ENCODE measurements at regions of chr11 and their contacts with region 1.

Region 1: GRCh38 chr11:46338988-46339666 is 8.1 kb upstream of the DGKZ start:
- DNase-seq: peak; percentile 59
- H3K4me3 ChIP-seq: peak overlapping the region in 1 of 2 donors; percentile 15
- H3K27ac ChIP-seq: peak overlapping the region; percentile 76 to 78
- H3K4me1 ChIP-seq: peaks cover 11% of the 10 kb centered on the region
- H3K27me3 ChIP-seq: no peaks in the 10 kb centered on the region
- CTCF ChIP-seq: peak in 1 of 4 experiments; percentile 16
- POLR2A ChIP-seq: no peak

Region 2: GRCh38 chr11:46121724-46122477 is 217.2 kb before region 1 on chr11:
- intact Hi-C with region 1: loop called (anchors 10 kb)
- DNase-seq: peak; percentile 79
- H3K4me3 ChIP-seq: peak overlapping the region; percentile 68 to 88
- H3K27ac ChIP-seq: peak overlapping the region; percentile 96
- H3K4me1 ChIP-seq: no peaks in the 10 kb centered on the region
- H3K27me3 ChIP-seq: no peaks in the 10 kb centered on the region
- CTCF ChIP-seq: peak in 1 of 4 experiments; percentile 7
- POLR2A ChIP-seq: peak; percentile 35